ENCODE measurements at regions of chr6 and their contacts with region 1.

Region 1: DNA sequence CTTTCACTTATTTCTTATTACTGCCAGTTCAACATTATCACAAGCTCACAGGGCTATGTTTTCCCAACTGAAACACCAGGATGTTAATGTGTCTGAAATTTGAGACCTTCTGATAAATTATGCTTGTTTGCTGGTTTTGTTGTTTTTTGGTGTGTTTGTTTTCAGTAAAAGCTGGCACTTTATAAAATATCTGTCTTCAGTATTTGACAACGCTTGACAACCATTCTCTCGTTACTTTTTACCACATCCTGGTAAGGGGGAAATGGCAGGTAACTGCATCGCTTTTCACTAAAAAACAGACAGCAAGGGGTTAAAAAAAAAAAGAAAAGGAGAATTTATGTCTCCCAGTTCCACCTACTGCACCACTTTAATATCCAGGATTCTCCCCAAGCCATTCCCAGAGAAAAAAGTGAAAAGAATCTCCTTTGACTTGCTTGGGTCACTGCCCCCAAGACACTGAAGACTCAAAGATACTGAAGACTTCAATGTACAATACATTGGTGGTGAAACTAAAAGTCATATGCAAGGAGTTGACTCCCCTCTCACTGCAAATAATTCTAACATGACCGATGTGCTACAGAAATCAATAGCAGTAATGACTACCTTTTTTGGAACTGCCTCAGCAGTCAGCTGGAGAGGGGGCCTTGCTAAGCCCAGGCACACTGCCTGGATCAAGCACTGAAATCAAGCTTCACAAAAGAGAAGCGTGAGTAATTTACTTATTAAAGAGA is 88.9 kb downstream of the HIVEP2 start:
- DNase-seq: no peak
- CTCF ChIP-seq: no peak

Region 2: DNA sequence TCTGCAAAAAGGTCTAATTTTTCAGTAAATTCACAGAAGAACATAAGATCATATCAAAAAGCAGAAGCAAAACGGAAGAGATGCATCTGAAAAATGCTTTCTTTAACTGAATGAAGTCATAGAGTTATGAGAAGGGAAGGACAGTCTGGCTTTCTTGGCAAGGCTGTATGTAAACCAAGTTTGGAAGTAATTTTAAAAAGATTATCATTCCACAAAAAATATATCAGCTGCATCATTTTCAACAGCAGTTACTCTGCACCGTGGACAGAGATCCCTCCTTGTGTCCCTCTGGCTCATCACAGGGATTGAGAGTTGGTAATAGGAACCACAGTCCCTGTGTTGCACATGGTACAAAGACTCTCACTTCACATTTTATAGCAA is 169.6 kb before region 1 on chr6:
- CTCF ChIA-PET with region 1: no interaction called
- POLR2A ChIA-PET with region 1: no interaction called
- DNase-seq: no peak
- CTCF ChIP-seq: no peak

Region 3: GRCh38 chr6:142906945-142907470 is 51.0 kb after region 1 on chr6:
- CTCF ChIA-PET with region 1: interaction called, 11 read pairs
- POLR2A ChIA-PET with region 1: no interaction called
- DNase-seq: peak; percentile 26
- CTCF ChIP-seq: no peak